Activated T-helper 1 cell treated with anti-CD3 and anti-CD28 coated beads, Interleukin-12 subunit alpha, Interleukin-12 subunit beta, Interleukin-2, Interleukin-4 antibody, amounts not matched to agents 30 ng/mL and 10 ng/mL and 1 ng/mL, durations not matched to agents 14 hours and 24 hours and 36 hours (primary cell): ENCODE measurements at regions of chr11 and their contacts with region 1.

Region 1: DNA sequence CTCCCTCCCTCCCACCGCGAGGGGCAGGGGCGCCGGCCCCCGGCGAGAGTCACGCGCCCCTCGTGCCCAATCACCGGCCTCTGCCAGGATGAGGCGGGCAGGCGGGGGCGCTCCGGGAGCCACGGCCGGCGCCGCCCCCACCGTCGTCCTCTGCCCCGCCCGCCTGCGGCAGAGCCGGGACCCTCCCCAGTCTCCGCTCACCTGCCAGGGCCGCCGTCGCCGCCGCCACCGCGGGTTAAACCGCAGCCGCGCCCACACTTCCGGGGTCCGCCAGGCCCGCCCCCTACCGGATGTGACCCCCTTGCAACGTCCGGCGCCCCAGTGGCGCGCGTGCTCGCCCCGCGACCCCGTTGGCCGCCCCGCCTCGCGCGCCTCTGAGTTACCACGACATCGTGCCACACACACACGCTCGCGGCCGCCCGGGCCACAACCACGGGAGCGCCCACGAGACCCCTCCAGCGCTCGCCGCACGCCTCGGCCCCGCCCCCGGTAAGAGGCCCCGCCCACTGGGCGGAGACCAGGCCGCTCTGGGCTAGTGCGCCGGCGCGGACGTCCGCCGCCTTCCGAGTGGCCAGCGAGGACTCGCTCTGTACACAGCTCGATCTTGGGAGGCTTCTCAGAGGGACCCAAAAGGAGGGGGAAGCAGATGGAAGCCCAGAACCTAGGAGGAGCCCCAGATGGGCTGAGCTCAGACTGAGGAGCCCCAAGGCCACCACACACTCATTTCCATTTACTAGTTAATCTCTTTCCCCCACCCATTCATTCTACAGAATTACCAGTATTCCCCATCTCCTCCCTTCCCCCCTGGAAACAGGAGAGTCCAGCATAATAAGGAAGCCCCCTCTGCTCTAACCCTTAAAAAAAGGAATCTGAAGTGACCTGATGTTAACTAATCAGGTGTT is at the start of gene VPS37C:
- DNase-seq: peak; percentile 89
- H3K4me3 Mint-ChIP-seq: peak within 1 kb of the TSS; percentile 89
- H3K27ac Mint-ChIP-seq: peak within 1 kb of the TSS; percentile 91
- H3K4me1 Mint-ChIP-seq: peaks cover 60% of the 10 kb centered on the region
- H3K27me3 Mint-ChIP-seq: no peaks in the 10 kb centered on the region
- total RNA-seq, gene VPS37C: 11.5 and 11.6 TPM in 2 replicates

Region 2: DNA sequence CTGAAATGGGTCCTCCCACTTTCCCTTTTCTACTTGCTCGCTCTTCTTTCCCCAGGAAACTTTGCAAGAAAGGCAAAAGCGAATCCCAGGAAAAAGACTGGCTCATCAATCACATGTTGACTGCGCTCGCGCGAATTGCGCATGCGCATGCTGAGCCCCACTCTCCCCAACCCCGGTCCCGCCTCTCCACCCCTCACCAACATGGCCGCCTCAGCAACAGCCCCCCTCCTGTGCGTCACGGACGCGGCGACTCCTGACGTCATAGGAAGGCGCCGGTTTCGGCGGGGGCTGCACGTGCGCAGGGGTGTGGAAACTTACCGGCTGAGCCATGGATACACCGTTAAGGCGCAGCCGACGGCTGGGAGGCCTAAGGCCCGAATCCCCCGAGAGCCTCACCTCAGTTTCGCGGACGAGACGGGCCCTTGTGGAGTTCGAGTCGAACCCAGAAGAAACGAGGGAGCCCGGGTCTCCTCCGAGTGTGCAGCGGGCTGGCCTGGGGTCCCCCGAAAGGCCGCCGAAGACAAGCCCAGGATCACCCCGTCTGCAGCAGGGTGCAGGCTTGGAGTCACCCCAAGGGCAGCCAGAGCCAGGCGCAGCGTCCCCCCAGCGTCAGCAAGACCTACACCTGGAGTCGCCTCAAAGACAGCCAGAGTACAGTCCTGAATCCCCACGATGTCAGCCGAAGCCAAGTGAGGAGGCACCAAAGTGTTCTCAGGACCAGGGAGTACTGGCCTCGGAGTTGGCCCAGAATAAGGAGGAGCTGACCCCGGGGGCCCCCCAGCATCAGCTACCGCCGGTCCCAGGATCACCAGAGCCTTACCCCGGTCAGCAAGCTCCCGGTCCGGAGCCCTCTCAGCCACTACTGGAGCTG is 319.4 kb before region 1 on chr11 and contains the start of gene CCDC86:
- intact Hi-C with region 1: loop called (anchors 1 kb)
- DNase-seq: peak; percentile 98
- H3K4me3 Mint-ChIP-seq: peak within 1 kb of the TSS; percentile 91
- H3K27ac Mint-ChIP-seq: peak within 1 kb of the TSS; percentile 83
- H3K4me1 Mint-ChIP-seq: peaks cover 46% of the 10 kb centered on the region
- H3K27me3 Mint-ChIP-seq: peaks cover 1% of the 10 kb centered on the region
- total RNA-seq, gene CCDC86: 88.2 and 92.2 TPM in 2 replicates

Region 3: DNA sequence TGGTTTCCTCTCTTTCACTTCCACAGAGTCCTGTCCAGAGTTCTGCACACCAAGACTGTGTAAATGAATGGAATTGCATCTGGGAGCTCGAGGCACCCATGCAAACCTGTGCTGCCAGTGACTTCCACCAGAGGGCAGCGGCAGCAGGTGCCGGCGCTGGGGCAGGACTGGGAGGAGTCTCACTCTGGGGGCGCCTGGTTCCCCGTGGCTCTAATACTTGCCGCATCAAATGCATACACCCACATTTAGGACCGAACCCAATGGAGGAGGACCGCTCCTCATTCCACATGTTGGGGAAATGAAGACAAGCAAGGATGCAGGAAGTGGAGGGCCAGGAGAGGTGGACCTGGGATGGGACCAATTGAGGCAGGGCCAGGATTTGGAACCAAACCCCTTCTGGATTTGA is 191.1 kb before region 1 on chr11:
- intact Hi-C with region 1: loop called (anchors 1 kb)
- DNase-seq: peak; percentile 68
- H3K4me3 Mint-ChIP-seq: peak overlapping the region; percentile 47
- H3K27ac Mint-ChIP-seq: no peak overlapping the region
- H3K4me1 Mint-ChIP-seq: peaks cover 43% of the 10 kb centered on the region
- H3K27me3 Mint-ChIP-seq: peaks cover 12% of the 10 kb centered on the region

Region 4: GRCh38 chr11:61028272-61028761 is 133.1 kb before region 1 on chr11:
- intact Hi-C with region 1: loop called (anchors 1 kb)
- DNase-seq: no peak
- H3K4me3 Mint-ChIP-seq: peak overlapping the region; percentile 91
- H3K27ac Mint-ChIP-seq: peak overlapping the region; percentile 100
- H3K4me1 Mint-ChIP-seq: peaks cover 87% of the 10 kb centered on the region
- H3K27me3 Mint-ChIP-seq: no peaks in the 10 kb centered on the region

Region 5: DNA sequence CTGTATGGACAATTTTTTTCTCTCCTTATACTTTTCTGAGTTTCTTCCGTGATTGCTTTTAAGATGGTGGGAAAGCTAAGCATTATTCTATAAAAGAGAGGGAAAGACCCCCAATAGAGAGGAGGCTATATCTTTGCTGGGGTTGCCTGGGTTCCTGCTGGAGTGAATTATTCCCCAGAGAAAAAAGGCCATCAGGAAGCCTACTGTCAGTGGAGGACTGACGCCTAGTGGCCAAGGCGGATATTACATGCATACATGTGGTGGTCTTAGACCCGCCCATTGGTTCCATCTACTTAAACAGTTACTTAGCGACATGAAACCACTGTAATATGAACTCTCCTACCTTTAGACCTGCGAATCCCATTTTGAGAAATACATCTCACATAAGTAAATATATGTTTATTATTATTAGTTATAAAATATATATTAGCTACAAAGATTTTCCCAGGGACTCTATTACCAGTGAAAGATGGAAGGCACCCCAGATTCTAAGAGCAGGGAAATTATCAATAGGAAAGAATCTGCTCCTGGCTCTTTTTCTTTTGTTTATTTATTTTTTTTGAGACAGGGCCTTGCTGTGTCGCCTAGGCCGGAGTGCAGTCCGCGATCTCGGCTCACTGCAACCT is 26.2 kb after region 1 on chr11:
- intact Hi-C with region 1: loop called (anchors 1 kb)
- DNase-seq: peak; percentile 64
- H3K4me3 Mint-ChIP-seq: no peak overlapping the region
- H3K27ac Mint-ChIP-seq: no peak overlapping the region
- H3K4me1 Mint-ChIP-seq: no peaks in the 10 kb centered on the region
- H3K27me3 Mint-ChIP-seq: peaks cover 14% of the 10 kb centered on the region

Region 6: DNA sequence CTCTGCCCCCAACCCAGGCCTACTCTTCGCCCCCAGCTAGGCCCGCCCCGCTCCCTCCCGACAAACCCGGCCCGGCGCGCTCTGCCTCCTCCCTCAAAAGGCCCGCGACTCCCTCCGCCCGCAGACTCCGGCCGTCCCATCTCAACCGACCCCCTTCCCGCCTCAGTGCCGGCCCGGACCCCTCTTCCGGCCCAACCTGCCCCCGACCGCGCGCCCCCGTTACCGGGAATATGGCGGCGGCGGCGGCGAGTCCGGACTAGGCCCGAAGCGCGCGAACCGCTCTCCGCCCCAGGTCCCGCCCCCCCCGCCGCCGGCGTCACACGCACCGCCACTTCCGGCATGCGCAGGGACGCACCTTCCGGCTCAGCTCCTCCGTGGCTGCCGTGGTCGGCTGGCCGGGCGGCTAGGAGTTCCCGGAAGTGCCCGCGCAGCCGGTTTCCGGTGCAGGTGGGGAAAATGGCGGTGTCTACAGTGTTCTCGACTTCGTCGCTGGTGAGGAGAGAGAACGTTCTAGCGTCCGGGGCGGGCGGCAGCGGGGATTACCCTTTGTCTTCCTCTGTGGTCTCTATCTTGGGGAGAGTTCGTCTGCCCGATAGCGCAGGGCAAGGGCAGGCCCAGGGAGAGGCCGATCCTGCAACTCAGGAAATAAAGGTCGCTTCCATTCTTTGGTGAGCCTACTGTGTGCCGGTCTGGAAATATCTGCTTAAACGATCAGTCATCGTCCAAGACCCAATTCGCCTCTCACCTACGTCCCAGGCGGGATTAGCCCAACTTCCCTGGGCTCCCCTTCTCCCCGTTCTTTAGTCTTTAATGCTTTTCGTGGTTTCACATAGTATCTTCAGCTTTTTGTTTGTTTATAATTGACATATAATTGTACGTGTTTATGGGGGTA is 268.5 kb after region 1 on chr11 and contains the starts of genes CPSF7 and SDHAF2:
- intact Hi-C with region 1: loop called (anchors 5 kb)
- DNase-seq: peak; percentile 98
- H3K4me3 Mint-ChIP-seq: peak within 1 kb of the TSS; percentile 91
- H3K27ac Mint-ChIP-seq: peak within 1 kb of the TSS; percentile 97
- H3K4me1 Mint-ChIP-seq: peaks cover 61% of the 10 kb centered on the region
- H3K27me3 Mint-ChIP-seq: no peaks in the 10 kb centered on the region
- total RNA-seq, gene CPSF7: 141 and 148 TPM in 2 replicates
- total RNA-seq, gene SDHAF2: 49.5 and 58.1 TPM in 2 replicates

Region 7: GRCh38 chr11:62980133-62980760 is 1818.8 kb after region 1 on chr11:
- intact Hi-C with region 1: no loop called
- DNase-seq: no peak
- H3K4me3 Mint-ChIP-seq: no peak overlapping the region
- H3K27ac Mint-ChIP-seq: no peak overlapping the region
- H3K4me1 Mint-ChIP-seq: no peaks in the 10 kb centered on the region
- H3K27me3 Mint-ChIP-seq: no peaks in the 10 kb centered on the region